IMR-90 (cell line): ENCODE measurements at regions of chr22 and their contacts with region 1.

Region 1: GRCh38 chr22:39170825-39171622 is 18.5 kb upstream of the CBX7 start:
- DNase-seq: peak; percentile 52
- ATAC-seq: peak; percentile 80
- H3K4me3 ChIP-seq: no peak overlapping the region
- H3K27ac ChIP-seq: no peak overlapping the region
- H3K4me1 ChIP-seq: peaks cover 32% of the 10 kb centered on the region
- H3K27me3 ChIP-seq: peaks cover 2% of the 10 kb centered on the region; the same call in 1 of the 2 replicates
- CTCF ChIP-seq: peak; percentile 97
- POLR2A ChIP-seq: no peak
- RAD21 ChIP-seq: peak; percentile 99

Region 2: GRCh38 chr22:39220897-39221850 is 50.1 kb after region 1 on chr22:
- CTCF ChIA-PET with region 1: no interaction called
- POLR2A ChIA-PET with region 1: no interaction called
- dilution Hi-C with region 1: no loop called
- in situ Hi-C with region 1: no loop called
- intact Hi-C with region 1: no loop called
- DNase-seq: peak; percentile 34
- ATAC-seq: peak; percentile 44; the same call in 1 of the 2 replicates
- H3K4me3 ChIP-seq: no peak overlapping the region
- H3K27ac ChIP-seq: no peak overlapping the region
- H3K4me1 ChIP-seq: peaks cover 5% of the 10 kb centered on the region
- H3K27me3 ChIP-seq: peaks cover 1% of the 10 kb centered on the region; the same call in 1 of the 2 replicates
- CTCF ChIP-seq: no peak
- POLR2A ChIP-seq: no peak
- RAD21 ChIP-seq: no peak

Region 3: GRCh38 chr22:39234269-39234787 is 63.3 kb after region 1 on chr22:
- CTCF ChIA-PET with region 1: no interaction called
- POLR2A ChIA-PET with region 1: no interaction called
- dilution Hi-C with region 1: no loop called
- in situ Hi-C with region 1: no loop called
- intact Hi-C with region 1: no loop called
- DNase-seq: no peak
- ATAC-seq: no peak
- H3K4me3 ChIP-seq: no peak overlapping the region
- H3K27ac ChIP-seq: no peak overlapping the region
- H3K4me1 ChIP-seq: peaks cover 3% of the 10 kb centered on the region; the same call in 1 of the 2 replicates
- H3K27me3 ChIP-seq: peaks cover 1% of the 10 kb centered on the region; the same call in 1 of the 2 replicates
- CTCF ChIP-seq: no peak
- POLR2A ChIP-seq: no peak
- RAD21 ChIP-seq: no peak

Region 4: DNA sequence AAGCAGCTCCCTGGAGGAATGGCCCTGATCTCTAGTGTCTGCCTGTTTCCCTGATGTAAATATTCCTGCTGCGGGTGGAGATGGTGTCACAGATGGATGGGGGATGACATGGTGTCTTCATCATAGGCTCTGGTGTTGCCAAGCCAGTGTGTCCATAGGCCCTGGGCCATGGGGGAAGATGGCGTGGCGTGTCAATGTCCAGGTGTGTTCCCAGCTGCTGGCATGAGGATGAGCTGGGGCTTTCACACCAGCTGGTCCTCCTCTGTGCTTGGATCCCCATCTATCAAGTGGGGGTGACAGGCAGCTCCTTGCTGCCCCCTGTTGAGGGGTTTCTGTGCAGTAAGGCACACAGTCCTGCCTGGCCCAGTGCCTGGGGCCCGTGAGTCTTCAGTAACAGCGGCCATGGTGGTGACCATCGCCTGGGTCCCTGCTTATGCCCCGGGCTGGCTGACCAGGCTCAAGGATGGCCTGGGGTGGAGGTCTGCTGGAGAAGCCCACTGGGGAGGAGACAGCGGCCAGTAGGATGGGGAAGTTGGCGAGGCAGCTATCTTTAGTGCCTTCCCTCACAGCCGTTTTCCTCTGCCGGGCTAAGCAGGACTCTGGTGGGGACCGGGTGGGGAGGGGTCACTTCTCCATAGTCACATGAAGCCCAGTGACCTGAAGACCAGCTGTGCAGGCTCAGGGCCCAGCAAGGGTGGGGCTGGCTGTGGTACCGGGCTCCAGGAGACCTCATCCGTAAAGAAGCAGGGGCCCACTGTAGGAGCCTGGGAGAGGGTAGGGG is 135.7 kb after region 1 on chr22:
- CTCF ChIA-PET with region 1: interaction called, 3 read pairs
- POLR2A ChIA-PET with region 1: no interaction called
- dilution Hi-C with region 1: no loop called
- in situ Hi-C with region 1: loop called (anchors 5 kb)
- intact Hi-C with region 1: loop called (anchors 1 kb)
- DNase-seq: no peak
- ATAC-seq: no peak
- H3K4me3 ChIP-seq: no peak overlapping the region
- H3K27ac ChIP-seq: no peak overlapping the region
- H3K4me1 ChIP-seq: peaks cover 15% of the 10 kb centered on the region
- H3K27me3 ChIP-seq: no peaks in the 10 kb centered on the region
- CTCF ChIP-seq: peak; percentile 40
- POLR2A ChIP-seq: 0 out of 2 replicates have a peak, but pooled peaks have one; percentile 27
- RAD21 ChIP-seq: peak; percentile 28

Region 5: DNA sequence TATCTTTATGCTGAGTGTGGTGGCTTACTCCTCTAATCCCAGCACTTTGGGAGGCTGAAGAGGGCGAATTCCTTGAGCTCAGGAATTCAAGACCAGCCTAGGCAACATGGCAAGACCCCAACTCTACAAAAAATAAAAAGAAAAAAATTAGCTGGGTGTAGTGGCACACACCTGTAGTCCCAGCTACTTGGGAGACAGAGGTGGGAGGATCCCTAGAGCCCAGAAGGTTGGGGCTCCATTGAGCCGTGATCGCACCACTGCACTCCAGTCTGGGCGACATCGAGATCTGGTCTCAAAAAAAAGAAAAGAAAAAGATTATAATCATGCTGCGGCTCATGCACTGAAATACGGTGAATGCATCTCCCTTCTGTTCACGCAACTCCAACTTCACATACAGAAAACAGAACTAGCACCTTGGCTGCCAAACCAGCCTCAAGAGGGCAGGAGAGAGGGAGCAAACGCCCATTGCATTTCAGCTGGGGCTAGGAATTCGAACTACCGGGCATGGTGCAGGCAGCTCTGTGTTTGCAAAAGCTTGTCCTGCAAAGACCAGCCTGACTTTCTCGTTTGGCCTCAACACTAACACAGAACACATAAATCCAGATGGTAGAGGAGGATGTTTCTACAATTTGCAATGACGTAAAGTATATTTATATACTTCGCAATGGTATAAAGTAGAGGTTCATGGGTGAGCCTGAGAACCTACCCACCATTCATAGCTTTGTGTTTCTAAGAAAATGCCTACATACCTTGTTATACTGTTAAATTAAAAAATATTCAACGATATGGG is 172.4 kb after region 1 on chr22:
- CTCF ChIA-PET with region 1: interaction called, 3 read pairs
- POLR2A ChIA-PET with region 1: no interaction called
- dilution Hi-C with region 1: no loop called
- in situ Hi-C with region 1: no loop called
- intact Hi-C with region 1: loop called (anchors 1 kb)
- DNase-seq: peak; percentile 58
- ATAC-seq: peak; percentile 76
- H3K4me3 ChIP-seq: no peak overlapping the region
- H3K27ac ChIP-seq: no peak overlapping the region
- H3K4me1 ChIP-seq: peaks cover 7% of the 10 kb centered on the region
- H3K27me3 ChIP-seq: no peaks in the 10 kb centered on the region; the same call in 1 of the 2 replicates
- CTCF ChIP-seq: peak; percentile 69
- POLR2A ChIP-seq: no peak
- RAD21 ChIP-seq: peak; percentile 62

Region 6: DNA sequence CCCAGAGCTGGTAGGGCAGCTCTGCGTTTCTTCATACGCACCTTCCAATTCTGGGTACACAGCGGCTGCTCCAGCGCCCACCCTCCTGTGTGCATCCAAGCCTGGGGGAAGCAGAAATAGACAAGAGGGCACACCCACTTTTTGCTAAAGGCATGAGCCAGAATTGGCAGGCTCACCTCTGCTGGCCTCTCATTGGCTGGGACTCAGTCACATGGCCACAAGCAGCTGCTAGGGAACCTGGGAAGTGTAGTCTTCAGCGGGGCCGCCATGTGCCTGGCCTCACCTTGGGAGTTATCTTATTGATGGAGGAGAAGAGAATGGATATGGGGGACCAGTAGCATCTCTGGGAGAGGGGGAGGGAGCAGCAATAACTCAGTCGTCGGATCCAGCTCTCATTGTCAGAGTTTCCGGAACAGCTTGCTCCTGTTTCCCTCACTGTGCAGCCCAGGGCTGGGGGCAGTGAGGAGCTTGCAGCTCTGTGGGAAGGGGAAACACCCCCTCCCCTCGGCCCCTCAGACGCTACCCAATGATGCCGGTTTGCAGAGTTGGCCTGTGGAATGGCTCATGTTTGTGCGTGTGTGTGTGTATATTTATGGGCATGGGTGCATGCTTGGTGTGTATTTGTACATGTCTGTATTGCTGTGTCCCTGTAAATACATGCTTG is 319.2 kb after region 1 on chr22:
- CTCF ChIA-PET with region 1: no interaction called
- POLR2A ChIA-PET with region 1: no interaction called
- dilution Hi-C with region 1: no loop called
- in situ Hi-C with region 1: no loop called
- intact Hi-C with region 1: loop called (anchors 10 kb)
- DNase-seq: peak; percentile 65
- ATAC-seq: peak; percentile 79
- H3K4me3 ChIP-seq: no peak overlapping the region
- H3K27ac ChIP-seq: no peak overlapping the region
- H3K4me1 ChIP-seq: peaks cover 8% of the 10 kb centered on the region
- H3K27me3 ChIP-seq: no peaks in the 10 kb centered on the region
- CTCF ChIP-seq: no peak
- POLR2A ChIP-seq: no peak
- RAD21 ChIP-seq: no peak

Region 7: DNA sequence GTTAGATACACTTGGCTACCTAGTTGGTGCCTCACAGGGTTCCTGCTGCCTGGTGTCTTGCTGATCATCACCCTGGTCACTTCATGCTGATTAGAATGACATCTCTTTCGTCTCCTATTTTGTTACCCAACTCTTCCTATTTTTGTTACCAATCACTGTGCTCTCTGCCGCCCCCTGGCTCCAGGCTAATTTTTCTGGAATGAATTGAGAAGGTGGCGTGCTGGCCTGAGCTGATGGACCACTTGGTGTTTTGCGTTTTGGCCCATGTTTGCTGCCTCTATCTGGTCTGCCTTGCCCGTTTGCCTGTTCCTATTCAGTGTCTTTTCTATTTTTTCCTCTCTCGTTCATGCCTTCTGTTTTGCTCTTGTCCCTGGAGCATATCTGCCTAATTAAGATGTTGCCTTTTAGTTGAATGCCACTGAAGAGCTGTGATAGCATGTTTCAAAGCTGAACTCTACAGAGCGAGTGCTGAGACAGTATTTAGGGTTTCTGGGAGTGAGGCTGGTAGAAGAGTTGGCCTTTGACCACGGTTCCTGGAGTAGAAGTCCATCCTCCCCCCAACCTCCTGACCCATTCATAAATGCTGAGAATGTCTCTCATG is 343.4 kb after region 1 on chr22:
- CTCF ChIA-PET with region 1: no interaction called
- POLR2A ChIA-PET with region 1: no interaction called
- dilution Hi-C with region 1: no loop called
- in situ Hi-C with region 1: loop called (anchors 5 kb)
- intact Hi-C with region 1: no loop called
- DNase-seq: peak; percentile 34
- ATAC-seq: peak; percentile 67
- H3K4me3 ChIP-seq: no peak overlapping the region
- H3K27ac ChIP-seq: no peak overlapping the region
- H3K4me1 ChIP-seq: peaks cover 4% of the 10 kb centered on the region
- H3K27me3 ChIP-seq: no peaks in the 10 kb centered on the region
- CTCF ChIP-seq: peak; percentile 79
- POLR2A ChIP-seq: no peak
- RAD21 ChIP-seq: peak; percentile 68